ENCODE measurements at regions of chr3 and their contacts with region 1.

Region 1: DNA sequence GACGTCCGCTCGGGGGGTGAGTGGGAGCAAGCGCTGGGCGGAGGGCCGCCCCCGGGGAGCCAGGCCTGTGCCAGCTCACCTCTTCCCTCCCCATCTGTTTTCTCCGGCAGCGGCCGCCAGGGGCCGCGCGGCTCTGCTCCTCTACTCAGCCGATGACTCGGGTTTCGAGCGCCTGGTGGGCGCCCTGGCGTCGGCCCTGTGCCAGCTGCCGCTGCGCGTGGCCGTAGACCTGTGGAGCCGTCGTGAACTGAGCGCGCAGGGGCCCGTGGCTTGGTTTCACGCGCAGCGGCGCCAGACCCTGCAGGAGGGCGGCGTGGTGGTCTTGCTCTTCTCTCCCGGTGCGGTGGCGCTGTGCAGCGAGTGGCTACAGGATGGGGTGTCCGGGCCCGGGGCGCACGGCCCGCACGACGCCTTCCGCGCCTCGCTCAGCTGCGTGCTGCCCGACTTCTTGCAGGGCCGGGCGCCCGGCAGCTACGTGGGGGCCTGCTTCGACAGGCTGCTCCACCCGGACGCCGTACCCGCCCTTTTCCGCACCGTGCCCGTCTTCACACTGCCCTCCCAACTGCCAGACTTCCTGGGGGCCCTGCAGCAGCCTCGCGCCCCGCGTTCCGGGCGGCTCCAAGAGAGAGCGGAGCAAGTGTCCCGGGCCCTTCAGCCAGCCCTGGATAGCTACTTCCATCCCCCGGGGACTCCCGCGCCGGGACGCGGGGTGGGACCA is 632 bp upstream of the CRELD1 start:
- DNase-seq: peak; percentile 94
- H3K4me3 Mint-ChIP-seq: peak overlapping the region; percentile 86
- H3K27ac Mint-ChIP-seq: peak overlapping the region; percentile 89
- H3K4me1 Mint-ChIP-seq: peaks cover 28% of the 10 kb centered on the region
- H3K27me3 Mint-ChIP-seq: no peaks in the 10 kb centered on the region

Region 2: GRCh38 chr3:9792405-9793160 is 140.4 kb before region 1 on chr3 and contains the starts of genes ARPC4 and TADA3:
- CTCF ChIA-PET with region 1: interaction called, 9 read pairs
- POLR2A ChIA-PET with region 1: interaction called, 3 read pairs
- intact Hi-C with region 1: loop called (anchors 1 kb)
- DNase-seq: peak; percentile 93
- H3K4me3 Mint-ChIP-seq: peak within 1 kb of the TSS; percentile 99
- H3K27ac Mint-ChIP-seq: peak within 1 kb of the TSS; percentile 99
- H3K4me1 Mint-ChIP-seq: peaks cover 65% of the 10 kb centered on the region
- H3K27me3 Mint-ChIP-seq: no peaks in the 10 kb centered on the region
- total RNA-seq, gene ARPC4: 237 to 240 TPM
- total RNA-seq, gene TADA3: 86.9 to 92.1 TPM

Region 3: GRCh38 chr3:9915254-9916141 is 17.5 kb before region 1 on chr3:
- CTCF ChIA-PET with region 1: interaction called, 54 read pairs
- POLR2A ChIA-PET with region 1: interaction called, 8 read pairs
- intact Hi-C with region 1: loop called (anchors 2 kb)
- DNase-seq: peak; percentile 58
- H3K4me3 Mint-ChIP-seq: peak overlapping the region; percentile 65
- H3K27ac Mint-ChIP-seq: no peak overlapping the region
- H3K4me1 Mint-ChIP-seq: peaks cover 23% of the 10 kb centered on the region
- H3K27me3 Mint-ChIP-seq: peaks cover 2% of the 10 kb centered on the region

Region 4: DNA sequence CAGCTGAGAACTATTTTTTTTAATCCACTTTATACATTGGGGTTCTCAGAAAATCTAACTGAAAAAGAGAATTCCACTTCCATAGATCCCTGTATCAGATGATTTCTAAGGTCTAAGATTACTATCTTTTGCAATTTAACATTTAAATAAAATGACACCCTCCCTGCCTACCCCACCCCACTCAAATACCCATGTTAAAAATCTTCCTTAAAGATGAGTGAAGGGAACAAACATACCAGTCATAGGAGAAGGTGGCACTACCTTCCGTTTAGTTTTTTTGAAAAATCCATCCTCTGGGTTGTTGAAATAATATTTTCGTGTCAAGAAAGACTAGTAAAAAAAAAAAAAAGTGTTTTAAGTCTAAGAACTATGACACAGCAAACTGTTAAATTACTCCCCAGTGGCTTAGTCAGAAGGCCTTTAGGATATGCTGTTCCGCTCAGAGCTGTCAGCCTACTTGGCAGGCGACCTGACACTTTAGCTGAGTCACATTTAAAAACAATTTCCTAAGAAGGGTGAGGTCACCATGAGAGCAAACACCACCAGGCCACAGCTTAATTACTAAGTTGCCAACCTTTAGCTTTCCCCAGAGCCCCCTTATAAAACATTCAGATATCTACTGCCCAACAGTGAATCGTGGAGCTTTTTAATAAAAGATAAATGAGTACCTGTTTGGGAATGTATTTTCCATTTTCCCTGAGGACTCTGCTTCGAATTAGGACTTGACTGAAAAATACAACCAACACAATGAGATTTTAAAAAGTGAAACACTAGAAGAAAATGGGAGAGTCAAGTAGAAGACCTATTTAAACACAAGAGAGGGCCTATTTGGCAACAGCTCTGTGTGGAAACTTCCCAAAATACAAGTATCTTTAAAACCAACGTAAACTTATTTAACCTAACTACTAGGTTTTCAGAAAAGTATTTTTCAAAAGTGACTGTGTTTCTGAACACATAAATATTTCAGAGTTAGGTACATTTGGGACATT is 44.0 kb after region 1 on chr3:
- CTCF ChIA-PET with region 1: interaction called, 10 read pairs
- POLR2A ChIA-PET with region 1: interaction called, 4 read pairs
- intact Hi-C with region 1: no loop called
- DNase-seq: peak; percentile 69
- H3K4me3 Mint-ChIP-seq: no peak overlapping the region
- H3K27ac Mint-ChIP-seq: peak overlapping the region; percentile 64
- H3K4me1 Mint-ChIP-seq: peaks cover 26% of the 10 kb centered on the region
- H3K27me3 Mint-ChIP-seq: no peaks in the 10 kb centered on the region

Region 5: GRCh38 chr3:10074666-10075065 is 141.7 kb after region 1 on chr3:
- CTCF ChIA-PET with region 1: no interaction called
- POLR2A ChIA-PET with region 1: no interaction called
- intact Hi-C with region 1: no loop called
- DNase-seq: no peak
- H3K4me3 Mint-ChIP-seq: no peak overlapping the region
- H3K27ac Mint-ChIP-seq: no peak overlapping the region
- H3K4me1 Mint-ChIP-seq: no peaks in the 10 kb centered on the region
- H3K27me3 Mint-ChIP-seq: no peaks in the 10 kb centered on the region

Region 6: DNA sequence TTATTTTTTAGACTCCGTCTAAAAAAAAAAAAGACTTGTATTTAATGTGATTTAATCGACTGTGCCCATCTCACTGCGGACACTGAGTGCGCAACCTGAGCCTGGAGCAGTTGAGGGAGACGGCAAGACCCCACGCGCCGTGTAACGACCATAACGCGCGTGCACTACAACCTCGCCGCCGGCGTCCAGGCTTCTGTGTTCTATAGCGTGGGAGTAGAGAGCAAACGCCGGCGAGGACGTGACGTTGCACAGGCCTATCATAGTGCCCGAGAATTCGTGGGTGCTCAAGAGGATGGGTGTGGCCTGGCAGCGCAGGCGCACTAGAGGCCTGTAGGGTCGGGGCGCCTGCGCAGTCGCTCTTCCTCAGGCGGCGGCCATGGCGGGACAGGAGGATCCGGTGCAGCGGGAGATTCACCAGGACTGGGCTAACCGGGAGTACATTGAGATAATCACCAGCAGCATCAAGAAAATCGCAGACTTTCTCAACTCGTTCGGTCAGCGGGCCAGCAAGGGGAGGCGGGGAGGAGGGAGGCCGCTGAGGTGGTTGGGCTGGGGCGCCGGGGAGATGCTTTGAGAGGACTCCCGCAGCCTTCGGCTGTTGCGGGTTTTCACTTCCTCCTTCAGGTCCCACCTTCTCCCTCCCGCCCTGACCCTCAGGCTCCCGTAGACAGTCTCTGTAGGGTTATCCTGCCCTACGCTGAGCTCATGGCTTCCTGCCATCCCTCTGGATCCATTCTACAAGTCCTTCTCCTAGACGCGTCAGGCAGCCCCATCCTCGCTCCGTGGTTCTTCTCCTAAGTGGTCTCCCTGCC is 182.5 kb after region 1 on chr3 and contains the start of gene BRK1:
- CTCF ChIA-PET with region 1: no interaction called
- POLR2A ChIA-PET with region 1: no interaction called
- intact Hi-C with region 1: loop called (anchors 1 kb)
- DNase-seq: peak; percentile 97
- H3K4me3 Mint-ChIP-seq: peak within 1 kb of the TSS; percentile 96
- H3K27ac Mint-ChIP-seq: peak within 1 kb of the TSS; percentile 94
- H3K4me1 Mint-ChIP-seq: peaks cover 33% of the 10 kb centered on the region
- H3K27me3 Mint-ChIP-seq: peaks cover 2% of the 10 kb centered on the region
- total RNA-seq, gene BRK1: 70.3 to 76.1 TPM

Measured in activated CD4-positive, alpha-beta memory T cell treated with anti-CD3 and anti-CD28 coated beads for 36 hours (primary cell).